Right ventricle myocardium inferior (tissue), 1 donor: ENCODE measurements at regions of chr6 and their contacts with region 1.

Region 1: GRCh38 chr6:163986313-163986712 is 571.8 kb downstream of the QKI start:
- DNase-seq: no peak
- ATAC-seq: peak; percentile 60

Region 2: GRCh38 chr6:164085091-164086075 is 99.1 kb after region 1 on chr6:
- intact Hi-C with region 1: loop called (anchors 5 kb)
- DNase-seq: peak; percentile 93
- ATAC-seq: peak; percentile 98